Calu3 (cell line): ENCODE measurements at regions of chr1 and their contacts with region 1.

Region 1: GRCh38 chr1:147273409-147274336 is 31.2 kb downstream of the CHD1L start:
- DNase-seq: peak; percentile 43
- H3K4me3 Mint-ChIP-seq: no peak overlapping the region
- H3K27ac Mint-ChIP-seq: no peak overlapping the region
- H3K4me1 Mint-ChIP-seq: peaks cover 9% of the 10 kb centered on the region
- H3K27me3 Mint-ChIP-seq: no peaks in the 10 kb centered on the region
- CTCF ChIP-seq: no peak

Region 2: DNA sequence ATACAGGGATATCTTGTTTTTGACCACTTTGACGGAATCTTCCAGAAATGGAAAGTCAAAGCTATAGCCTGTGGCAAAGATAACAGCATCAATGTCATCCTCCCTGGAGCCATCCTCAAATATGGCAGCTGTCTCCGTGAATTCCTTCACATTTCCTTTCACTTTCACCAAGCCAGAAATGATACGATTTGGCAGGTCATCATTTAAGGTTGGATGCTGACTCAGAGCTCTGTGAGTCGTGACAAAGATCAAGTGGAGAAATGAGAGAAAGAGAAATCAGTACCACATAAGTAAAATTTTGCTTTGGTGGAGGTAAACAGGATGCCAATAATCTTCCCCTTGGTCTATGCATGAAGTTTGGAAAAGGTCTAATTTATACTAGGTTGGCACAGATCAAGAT is 72.4 kb before region 1 on chr1:
- CTCF ChIA-PET with region 1: no interaction called
- intact Hi-C with region 1: no loop called
- DNase-seq: no peak
- H3K4me3 Mint-ChIP-seq: no peak overlapping the region
- H3K27ac Mint-ChIP-seq: no peak overlapping the region
- H3K4me1 Mint-ChIP-seq: no peaks in the 10 kb centered on the region
- H3K27me3 Mint-ChIP-seq: no peaks in the 10 kb centered on the region
- CTCF ChIP-seq: no peak

Region 3: GRCh38 chr1:147585640-147586383 is 312.1 kb after region 1 on chr1:
- CTCF ChIA-PET with region 1: no interaction called
- intact Hi-C with region 1: no loop called
- DNase-seq: no peak
- H3K4me3 Mint-ChIP-seq: no peak overlapping the region
- H3K27ac Mint-ChIP-seq: no peak overlapping the region
- H3K4me1 Mint-ChIP-seq: no peaks in the 10 kb centered on the region
- H3K27me3 Mint-ChIP-seq: no peaks in the 10 kb centered on the region
- CTCF ChIP-seq: no peak

Region 4: GRCh38 chr1:147627435-147628110 is 353.9 kb after region 1 on chr1:
- CTCF ChIA-PET with region 1: no interaction called
- intact Hi-C with region 1: loop called (anchors 2 kb)
- DNase-seq: peak; percentile 74
- H3K4me3 Mint-ChIP-seq: no peak overlapping the region
- H3K27ac Mint-ChIP-seq: no peak overlapping the region
- H3K4me1 Mint-ChIP-seq: no peaks in the 10 kb centered on the region
- H3K27me3 Mint-ChIP-seq: no peaks in the 10 kb centered on the region
- CTCF ChIP-seq: peak; percentile 94